IMR-90 (cell line): ENCODE measurements at regions of chr5 and their contacts with region 1.

Region 1: DNA sequence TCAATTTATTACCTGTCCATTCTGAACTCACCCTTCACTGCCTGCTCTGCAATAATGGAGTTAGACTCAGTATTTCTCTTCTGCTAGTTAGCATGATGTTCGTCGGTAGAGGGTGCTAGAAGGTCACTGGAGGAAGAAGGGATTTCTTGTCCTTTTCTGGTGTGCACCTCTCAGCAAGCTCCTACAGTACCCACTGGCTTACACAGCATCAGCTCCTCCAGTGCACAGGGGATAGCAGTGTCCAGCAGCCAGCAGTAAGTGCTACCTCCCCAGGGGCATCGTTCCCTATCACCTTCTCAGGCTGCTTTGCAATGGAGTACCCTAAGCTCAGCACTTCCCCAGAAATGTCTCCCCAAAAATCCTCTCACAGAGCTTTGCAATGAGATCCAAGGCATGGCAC is 45.9 kb upstream of the APC start:
- DNase-seq: peak; percentile 43
- ATAC-seq: peak; percentile 57
- H3K4me3 ChIP-seq: no peak overlapping the region
- H3K27ac ChIP-seq: no peak overlapping the region
- H3K4me1 ChIP-seq: no peaks in the 10 kb centered on the region; the same call in 1 of the 2 replicates
- H3K27me3 ChIP-seq: peaks cover 2% of the 10 kb centered on the region; the same call in 1 of the 2 replicates
- CTCF ChIP-seq: peak; percentile 53
- POLR2A ChIP-seq: no peak
- RAD21 ChIP-seq: peak; percentile 63

Region 2: DNA sequence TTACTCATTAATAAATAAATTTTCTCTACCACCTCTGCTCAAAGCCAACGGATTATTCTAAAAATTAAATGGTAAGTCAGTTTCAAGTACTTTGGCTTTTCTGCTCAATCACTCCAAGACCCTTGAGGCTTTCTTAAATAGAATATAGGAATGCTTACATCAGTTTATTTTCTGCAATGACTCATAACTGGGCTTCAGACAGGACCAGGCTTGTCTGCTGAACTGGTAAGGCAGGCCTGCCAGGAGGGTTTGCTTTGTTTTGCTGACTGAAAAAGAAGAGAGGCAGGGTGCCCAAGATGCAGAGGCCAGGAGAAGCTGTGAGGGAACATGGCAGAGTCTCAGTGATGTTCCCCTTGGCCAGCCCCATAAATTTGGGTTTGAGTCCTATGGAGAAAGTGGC is 212.4 kb before region 1 on chr5:
- CTCF ChIA-PET with region 1: interaction called, 4 read pairs
- POLR2A ChIA-PET with region 1: interaction called, 10 read pairs
- dilution Hi-C with region 1: no loop called
- in situ Hi-C with region 1: no loop called
- intact Hi-C with region 1: no loop called
- DNase-seq: peak; percentile 54
- ATAC-seq: peak; percentile 93
- H3K4me3 ChIP-seq: no peak overlapping the region
- H3K27ac ChIP-seq: no peak overlapping the region
- H3K4me1 ChIP-seq: no peaks in the 10 kb centered on the region
- H3K27me3 ChIP-seq: no peaks in the 10 kb centered on the region; the same call in 1 of the 2 replicates
- CTCF ChIP-seq: no peak
- POLR2A ChIP-seq: no peak
- RAD21 ChIP-seq: no peak

Region 3: DNA sequence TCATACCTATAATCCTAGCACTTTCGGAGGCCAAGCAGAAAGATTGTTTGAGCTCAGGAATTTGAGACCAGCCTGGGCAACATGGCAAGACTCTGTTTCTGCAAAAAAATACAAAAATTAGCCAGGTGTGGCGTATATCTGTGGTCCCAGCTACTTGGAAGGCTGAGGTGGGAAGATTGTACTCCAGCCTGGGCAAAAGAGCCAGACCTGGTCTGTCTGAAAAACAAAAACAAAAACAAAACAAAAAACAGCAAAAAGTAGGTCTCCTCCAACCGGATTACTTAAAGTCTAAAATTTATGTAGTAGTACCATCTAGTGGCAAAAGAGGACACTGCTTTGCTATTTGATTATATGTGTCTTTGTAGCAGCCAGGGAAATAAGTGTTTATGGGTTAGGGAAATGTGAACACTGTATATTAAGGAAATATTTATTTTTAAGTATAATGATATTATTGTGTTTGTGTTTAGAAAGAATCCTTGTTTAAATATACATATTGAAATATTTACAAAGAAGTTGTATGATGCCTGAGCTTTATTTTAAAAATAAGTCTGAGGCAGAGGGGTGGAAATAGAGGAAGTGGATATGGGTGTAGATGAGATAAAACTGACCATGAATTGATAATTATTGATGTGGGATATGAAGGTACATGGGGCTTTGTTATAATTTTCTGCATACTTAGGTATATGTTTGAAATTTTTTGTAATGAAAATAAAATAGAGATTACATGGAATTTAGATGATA is 65.9 kb after region 1 on chr5:
- CTCF ChIA-PET with region 1: interaction called, 5 read pairs
- POLR2A ChIA-PET with region 1: no interaction called
- dilution Hi-C with region 1: no loop called
- in situ Hi-C with region 1: no loop called
- intact Hi-C with region 1: loop called (anchors 1 kb)
- DNase-seq: peak; percentile 68
- ATAC-seq: peak; percentile 89
- H3K4me3 ChIP-seq: no peak overlapping the region
- H3K27ac ChIP-seq: no peak overlapping the region
- H3K4me1 ChIP-seq: no peaks in the 10 kb centered on the region
- H3K27me3 ChIP-seq: no peaks in the 10 kb centered on the region
- CTCF ChIP-seq: peak; percentile 82
- POLR2A ChIP-seq: no peak
- RAD21 ChIP-seq: peak; percentile 75